Aorta (tissue), 5 donors: ENCODE measurements at regions of chr12 and their contacts with region 1.

Region 1: GRCh38 chr12:54993161-54993835 is 8.7 kb upstream of the TESPA1 start:
- DNase-seq: no peak
- ATAC-seq: peak; percentile 77
- H3K4me3 ChIP-seq: no peak overlapping the region
- H3K27ac ChIP-seq: no peak overlapping the region
- H3K4me1 ChIP-seq: no peaks in the 10 kb centered on the region
- H3K27me3 ChIP-seq: peaks cover 0 to 2% of the 10 kb centered on the region in 2 donors

Region 2: GRCh38 chr12:54870604-54871003 is 122.7 kb before region 1 on chr12:
- intact Hi-C with region 1: no loop called
- DNase-seq: no peak
- ATAC-seq: no peak
- H3K4me3 ChIP-seq: no peak overlapping the region
- H3K27ac ChIP-seq: no peak overlapping the region
- H3K4me1 ChIP-seq: no peaks in the 10 kb centered on the region
- H3K27me3 ChIP-seq: no peaks in the 10 kb centered on the region

Region 3: GRCh38 chr12:55073043-55074022 is 80.0 kb after region 1 on chr12:
- intact Hi-C with region 1: loop called (anchors 2 to 5 kb)
- DNase-seq: peak; percentile 78 to 84
- ATAC-seq: peak; percentile 71
- H3K4me3 ChIP-seq: no peak overlapping the region
- H3K27ac ChIP-seq: no peak overlapping the region
- H3K4me1 ChIP-seq: no peaks in the 10 kb centered on the region
- H3K27me3 ChIP-seq: no peaks in the 10 kb centered on the region